Activated T-helper 2 cell treated with anti-CD3 and anti-CD28 coated beads, Interferon-gamma antibody, Interleukin-2, Interleukin-4, amounts not matched to agents 10 μg/mL and 5 μg/mL and 100 μg/mL, durations not matched to agents 14 hours and 24 hours and 36 hours (primary cell): ENCODE measurements at regions of chr6 and their contacts with region 1.

Region 1: GRCh38 chr6:15776458-15776980 is 113.7 kb upstream of the DTNBP1 start:
- DNase-seq: peak; percentile 33
- H3K4me3 Mint-ChIP-seq: peak overlapping the region; percentile 70
- H3K27ac Mint-ChIP-seq: peak overlapping the region; percentile 96
- H3K4me1 Mint-ChIP-seq: peaks cover 77% of the 10 kb centered on the region
- H3K27me3 Mint-ChIP-seq: no peaks in the 10 kb centered on the region

Region 2: GRCh38 chr6:15715060-15715459 is 61.5 kb before region 1 on chr6:
- intact Hi-C with region 1: loop called (anchors 1 kb)
- DNase-seq: no peak
- H3K4me3 Mint-ChIP-seq: no peak overlapping the region
- H3K27ac Mint-ChIP-seq: peak overlapping the region; percentile 49
- H3K4me1 Mint-ChIP-seq: peaks cover 16% of the 10 kb centered on the region
- H3K27me3 Mint-ChIP-seq: no peaks in the 10 kb centered on the region

Region 3: GRCh38 chr6:15754035-15754705 is 22.3 kb before region 1 on chr6:
- intact Hi-C with region 1: no loop called
- DNase-seq: no peak
- H3K4me3 Mint-ChIP-seq: no peak overlapping the region
- H3K27ac Mint-ChIP-seq: no peak overlapping the region
- H3K4me1 Mint-ChIP-seq: peaks cover 8% of the 10 kb centered on the region
- H3K27me3 Mint-ChIP-seq: no peaks in the 10 kb centered on the region

Region 4: DNA sequence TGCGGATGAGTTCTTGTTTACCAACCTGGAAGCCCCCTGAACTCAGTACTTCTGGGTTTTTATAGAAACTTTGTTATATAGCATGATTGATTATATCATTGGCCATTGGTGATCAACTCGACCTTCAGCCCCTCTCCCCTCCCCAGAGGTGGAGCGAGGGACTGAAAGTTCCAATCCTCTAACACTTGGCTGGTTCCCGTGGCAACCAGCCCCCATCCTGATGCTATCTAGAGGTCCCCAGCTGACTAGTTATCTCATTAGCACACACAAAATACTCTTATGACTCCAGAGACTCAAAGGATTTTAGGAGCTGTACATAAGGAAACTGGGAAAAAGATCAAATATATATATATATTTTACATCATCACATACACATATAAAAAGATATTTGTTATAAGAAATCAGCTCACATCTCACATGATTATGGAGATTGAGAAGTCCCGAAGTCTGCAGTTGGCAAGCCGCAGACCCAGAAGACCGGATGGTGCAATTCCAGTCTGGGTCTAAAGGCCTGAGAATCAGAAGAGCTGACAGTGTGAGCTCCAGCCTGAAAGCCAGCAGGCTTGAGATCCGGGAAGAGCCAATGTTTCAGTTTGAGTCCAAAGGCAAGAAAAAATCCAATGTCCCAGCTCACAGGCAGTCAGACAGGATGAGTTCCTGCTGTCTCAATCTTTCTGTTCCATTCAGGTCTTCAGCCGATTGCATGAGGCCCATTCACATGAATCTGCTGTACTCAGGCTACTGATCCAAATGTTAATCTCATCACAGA is 65.6 kb after region 1 on chr6:
- intact Hi-C with region 1: loop called (anchors 2 kb)
- DNase-seq: no peak
- H3K4me3 Mint-ChIP-seq: no peak overlapping the region
- H3K27ac Mint-ChIP-seq: peak overlapping the region; percentile 63
- H3K4me1 Mint-ChIP-seq: peaks cover 39% of the 10 kb centered on the region
- H3K27me3 Mint-ChIP-seq: no peaks in the 10 kb centered on the region

Region 5: DNA sequence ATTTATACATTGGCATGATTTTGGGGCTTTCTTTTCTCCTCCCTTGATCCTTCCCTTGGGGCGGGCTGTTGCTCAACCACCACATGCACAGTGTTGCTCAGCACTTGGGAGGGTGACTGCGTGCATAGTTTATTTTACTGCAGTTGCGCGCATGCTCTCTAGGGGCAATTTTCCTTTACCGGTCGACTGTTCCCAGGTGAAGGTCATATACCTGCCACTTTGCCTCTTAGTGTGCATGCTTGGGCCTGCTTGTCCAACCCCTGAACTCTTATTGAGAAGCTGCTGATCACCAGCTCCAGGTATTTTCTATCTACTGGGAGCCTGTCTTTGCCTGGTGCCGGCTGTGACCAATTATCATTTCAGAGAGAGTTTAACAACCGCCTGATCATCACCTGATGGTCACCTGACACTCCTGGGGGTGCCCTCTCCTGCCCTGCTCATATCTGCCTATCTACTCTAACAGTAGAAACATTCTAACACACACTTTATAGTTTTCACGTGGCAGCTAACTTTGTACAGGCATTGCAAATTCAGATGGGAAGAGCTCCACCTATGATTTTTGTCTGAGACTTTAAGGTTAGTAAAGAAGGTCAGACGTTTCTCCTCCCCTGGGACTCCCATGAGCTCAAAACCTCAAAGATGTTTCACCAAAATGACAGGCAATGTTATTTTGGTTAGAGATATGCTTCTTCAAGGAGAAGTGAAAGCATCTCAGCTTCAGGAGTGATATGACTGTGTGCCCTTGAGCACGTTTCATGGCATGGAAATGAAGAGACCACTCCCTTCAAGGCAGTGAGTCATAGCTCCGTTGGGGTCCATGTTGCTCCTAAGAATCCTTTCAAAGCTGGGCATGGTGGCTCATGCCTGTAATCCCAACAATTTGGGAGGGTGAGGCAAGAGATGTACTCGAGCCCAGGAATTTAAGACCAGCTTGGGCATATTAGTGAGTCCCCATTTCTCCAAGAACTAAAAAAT is 124.9 kb after region 1 on chr6:
- intact Hi-C with region 1: loop called (anchors 1 kb)
- DNase-seq: peak; percentile 64
- H3K4me3 Mint-ChIP-seq: peak overlapping the region; percentile 24
- H3K27ac Mint-ChIP-seq: peak overlapping the region; percentile 99
- H3K4me1 Mint-ChIP-seq: peaks cover 69% of the 10 kb centered on the region
- H3K27me3 Mint-ChIP-seq: no peaks in the 10 kb centered on the region

Region 6: GRCh38 chr6:15962449-15962764 is 185.9 kb after region 1 on chr6:
- intact Hi-C with region 1: loop called (anchors 2 kb)
- DNase-seq: peak; percentile 39
- H3K4me3 Mint-ChIP-seq: no peak overlapping the region
- H3K27ac Mint-ChIP-seq: peak overlapping the region; percentile 86
- H3K4me1 Mint-ChIP-seq: peaks cover 32% of the 10 kb centered on the region
- H3K27me3 Mint-ChIP-seq: no peaks in the 10 kb centered on the region

Region 7: DNA sequence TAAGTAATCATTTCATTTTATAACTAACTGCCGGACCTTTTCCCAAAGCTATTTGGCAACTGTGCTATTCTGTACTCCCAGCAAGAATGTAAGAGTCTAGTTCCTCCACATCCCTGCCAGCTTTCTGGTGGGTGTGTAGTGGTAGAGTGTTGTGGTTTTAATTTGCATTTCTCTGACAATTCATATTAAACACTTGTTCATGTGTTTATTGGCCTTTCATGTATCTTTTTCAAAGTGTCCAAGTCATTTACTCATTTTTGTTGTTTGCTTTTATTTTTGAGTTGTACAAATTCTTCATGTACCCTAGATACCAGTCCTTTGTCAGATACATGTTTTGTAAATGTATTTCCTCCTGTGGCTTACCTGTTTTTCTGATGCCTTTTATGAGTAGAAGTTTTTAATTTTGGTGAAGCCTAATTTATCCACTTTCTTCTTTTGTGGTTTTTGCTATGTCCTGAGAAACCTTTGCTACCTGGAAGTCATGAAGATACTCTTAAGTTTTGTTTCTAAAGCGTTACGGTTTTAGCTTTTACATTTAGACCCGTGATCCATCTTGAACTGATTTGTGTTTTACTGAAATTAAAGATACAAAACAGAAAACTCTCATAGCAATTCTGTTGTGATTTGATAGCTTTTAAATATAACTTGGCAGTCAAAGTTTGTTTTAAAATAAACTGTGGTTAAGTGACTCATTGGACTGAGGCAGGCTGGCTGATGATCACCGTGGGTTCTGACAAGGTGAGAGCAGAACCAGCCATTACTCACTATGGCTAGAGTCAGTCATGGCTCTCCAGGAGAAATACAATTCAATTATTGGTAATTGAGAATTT is 360.3 kb after region 1 on chr6:
- intact Hi-C with region 1: loop called (anchors 1 kb)
- DNase-seq: peak; percentile 29
- H3K4me3 Mint-ChIP-seq: peak overlapping the region; percentile 77
- H3K27ac Mint-ChIP-seq: peak overlapping the region; percentile 94
- H3K4me1 Mint-ChIP-seq: peaks cover 68% of the 10 kb centered on the region
- H3K27me3 Mint-ChIP-seq: no peaks in the 10 kb centered on the region